ENCODE measurements at regions of chr1 and their contacts with region 1.

Region 1: DNA sequence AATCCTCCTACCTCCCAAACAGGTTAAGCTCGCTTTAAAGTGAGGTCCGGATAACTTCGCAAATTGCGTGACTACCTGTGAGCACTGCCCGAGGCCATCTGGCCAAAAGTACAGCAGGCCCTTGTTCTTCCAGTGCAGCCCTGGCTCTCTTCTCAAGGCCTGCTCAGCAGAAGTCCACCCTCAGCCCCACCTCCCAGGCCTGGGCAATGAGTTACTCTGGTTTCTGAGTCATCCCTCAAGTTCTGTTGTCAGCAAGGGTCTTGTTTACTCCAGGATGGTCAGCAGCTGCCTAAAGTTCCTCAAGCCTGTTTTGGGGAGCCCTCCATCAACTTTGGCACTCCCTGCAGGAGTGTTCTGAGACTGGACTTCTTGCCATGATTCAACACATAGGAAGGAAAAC is 101.7 kb downstream of the BCAR3 start:
- DNase-seq: peak; percentile 93 to 100
- H3K4me3 ChIP-seq: no peak overlapping the region
- H3K27ac ChIP-seq: peak overlapping the region; percentile 83
- H3K4me1 ChIP-seq: peaks cover 68% of the 10 kb centered on the region
- H3K27me3 ChIP-seq: no peaks in the 10 kb centered on the region
- CTCF ChIP-seq: no peak

Region 2: GRCh38 chr1:93661829-93662474 is 82.1 kb after region 1 on chr1:
- CTCF ChIA-PET with region 1: no interaction called
- POLR2A ChIA-PET with region 1: interaction called, 10 read pairs
- intact Hi-C with region 1: no loop called
- DNase-seq: peak; percentile 60 to 83
- H3K4me3 ChIP-seq: peak overlapping the region; percentile 1; the same call in 1 of the 2 replicates
- H3K27ac ChIP-seq: peak overlapping the region; percentile 86
- H3K4me1 ChIP-seq: peaks cover 74% of the 10 kb centered on the region
- H3K27me3 ChIP-seq: no peaks in the 10 kb centered on the region
- CTCF ChIP-seq: no peak

Region 3: GRCh38 chr1:93692983-93693591 is 113.2 kb after region 1 on chr1:
- CTCF ChIA-PET with region 1: no interaction called
- POLR2A ChIA-PET with region 1: interaction called, 10 read pairs
- intact Hi-C with region 1: no loop called
- DNase-seq: peak; percentile 74 to 98
- H3K4me3 ChIP-seq: peak overlapping the region; percentile 43
- H3K27ac ChIP-seq: peak overlapping the region; percentile 99
- H3K4me1 ChIP-seq: peaks cover 75% of the 10 kb centered on the region
- H3K27me3 ChIP-seq: no peaks in the 10 kb centered on the region
- CTCF ChIP-seq: no peak

Region 4: DNA sequence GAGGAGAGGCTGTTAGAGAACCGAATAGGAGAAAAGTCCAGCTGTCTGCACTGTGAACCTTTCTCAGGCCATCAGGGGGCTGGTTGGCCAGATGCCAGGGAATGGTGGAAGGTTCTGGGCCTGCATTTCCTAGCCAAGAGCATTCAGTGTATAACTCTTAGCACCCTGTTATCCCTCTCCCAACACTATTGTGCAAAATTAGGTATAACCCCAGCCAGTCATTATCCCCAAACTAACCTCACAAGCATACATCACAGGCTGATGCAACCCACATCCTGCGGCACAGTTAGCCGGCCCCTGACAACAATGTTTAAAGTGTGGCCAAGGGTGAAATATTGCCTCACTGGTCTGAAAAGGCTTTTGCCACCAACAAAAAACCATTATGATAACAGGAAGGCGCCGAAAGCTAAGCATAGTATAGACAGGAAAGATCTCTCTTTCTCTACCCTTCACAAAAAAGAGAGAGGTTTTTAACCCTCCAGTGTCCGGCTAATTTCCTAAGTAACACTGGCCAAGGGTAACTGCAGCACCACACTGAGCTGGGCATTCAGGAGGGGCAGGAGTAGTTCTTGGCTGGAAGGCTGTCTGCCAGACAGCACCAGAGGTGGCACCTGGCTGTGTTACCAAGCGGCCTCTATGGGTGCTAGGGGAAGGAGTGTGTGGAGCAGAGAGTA is 179.1 kb after region 1 on chr1:
- CTCF ChIA-PET with region 1: no interaction called
- POLR2A ChIA-PET with region 1: no interaction called
- intact Hi-C with region 1: loop called (anchors 5 kb)
- DNase-seq: peak; percentile 60 to 97
- H3K4me3 ChIP-seq: peak overlapping the region; percentile 20; the same call in 1 of the 2 replicates
- H3K27ac ChIP-seq: peak overlapping the region; percentile 85
- H3K4me1 ChIP-seq: peaks cover 100% of the 10 kb centered on the region
- H3K27me3 ChIP-seq: no peaks in the 10 kb centered on the region
- CTCF ChIP-seq: no peak; the same call in 1 of the 2 replicates

Region 5: GRCh38 chr1:93827633-93828366 is 247.9 kb after region 1 on chr1:
- CTCF ChIA-PET with region 1: no interaction called
- POLR2A ChIA-PET with region 1: no interaction called
- intact Hi-C with region 1: loop called (anchors 5 kb)
- DNase-seq: peak in 1 of 2 experiments; percentile 90
- H3K4me3 ChIP-seq: peak overlapping the region; percentile 10; the same call in 1 of the 2 replicates
- H3K27ac ChIP-seq: peak overlapping the region; percentile 72
- H3K4me1 ChIP-seq: peaks cover 44% of the 10 kb centered on the region
- H3K27me3 ChIP-seq: no peaks in the 10 kb centered on the region
- CTCF ChIP-seq: no peak

Measured in PC-9 (cell line).